Posterior cingulate gyrus (tissue), 11 donors: ENCODE measurements at regions of chr10 and their contacts with region 1.

Region 1: GRCh38 chr10:130127364-130128061 is 8.7 kb upstream of the GLRX3 start:
- DNase-seq: peak in 8 of 10 donors; percentile 38 to 93 (median 60)

Region 2: GRCh38 chr10:129030996-129031843 is 1096.3 kb before region 1 on chr10:
- intact Hi-C with region 1: loop called (anchors 5 kb)
- DNase-seq: peak in 5 of 10 donors; percentile 29 to 91 (median 43)